Activated CD4-positive, alpha-beta T cell treated with anti-CD3 and anti-CD28 coated beads for 36 hours (primary cell): ENCODE measurements at regions of chr19 and their contacts with region 1.

Region 1: DNA sequence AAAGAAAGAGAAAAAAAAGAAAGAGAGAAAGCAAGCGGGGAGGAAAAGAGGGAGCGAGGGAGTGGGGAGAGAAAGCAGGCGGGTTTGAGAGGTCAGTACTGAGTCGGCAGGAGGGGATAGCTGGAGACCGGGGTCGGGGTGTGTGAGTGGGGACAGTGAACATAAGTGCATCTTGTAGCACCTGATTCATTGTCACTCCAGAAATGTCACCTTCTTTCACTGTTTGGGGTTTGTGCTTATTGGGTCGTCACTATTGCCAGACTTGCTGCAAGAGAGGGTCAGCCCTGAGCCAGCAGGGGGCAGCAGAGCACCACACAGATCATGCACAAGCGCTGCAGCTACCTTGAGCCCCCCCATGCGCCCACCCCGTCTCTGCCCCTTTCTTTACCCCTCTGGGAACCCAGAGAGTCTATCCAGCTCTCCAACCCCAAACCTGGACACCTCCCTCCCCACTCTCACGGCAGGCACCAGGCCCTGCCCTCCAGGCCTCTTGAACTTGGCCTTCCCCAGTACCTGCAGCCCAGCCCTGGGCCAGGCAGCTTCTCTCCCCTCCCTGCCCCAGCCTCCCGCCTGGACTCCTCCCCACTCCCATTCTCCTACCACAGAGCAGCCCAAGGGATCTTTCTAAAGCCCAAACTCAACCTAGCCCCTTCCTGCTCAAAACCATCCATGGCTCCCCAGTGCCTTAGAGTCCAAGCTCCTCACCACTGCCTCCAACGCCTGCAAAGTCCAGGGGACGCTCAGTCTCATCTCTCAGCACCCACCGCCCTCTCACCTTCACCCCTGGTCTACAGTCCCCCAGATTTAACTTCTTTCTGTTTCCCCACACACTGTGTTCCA is 9.7 kb upstream of the CEACAM16 start:
- DNase-seq: peak; percentile 90
- ATAC-seq: peak; percentile 39
- H3K4me3 Mint-ChIP-seq: no peak overlapping the region
- H3K27ac Mint-ChIP-seq: no peak overlapping the region
- H3K4me1 Mint-ChIP-seq: peaks cover 42% of the 10 kb centered on the region
- H3K27me3 Mint-ChIP-seq: peaks cover 17% of the 10 kb centered on the region

Region 2: DNA sequence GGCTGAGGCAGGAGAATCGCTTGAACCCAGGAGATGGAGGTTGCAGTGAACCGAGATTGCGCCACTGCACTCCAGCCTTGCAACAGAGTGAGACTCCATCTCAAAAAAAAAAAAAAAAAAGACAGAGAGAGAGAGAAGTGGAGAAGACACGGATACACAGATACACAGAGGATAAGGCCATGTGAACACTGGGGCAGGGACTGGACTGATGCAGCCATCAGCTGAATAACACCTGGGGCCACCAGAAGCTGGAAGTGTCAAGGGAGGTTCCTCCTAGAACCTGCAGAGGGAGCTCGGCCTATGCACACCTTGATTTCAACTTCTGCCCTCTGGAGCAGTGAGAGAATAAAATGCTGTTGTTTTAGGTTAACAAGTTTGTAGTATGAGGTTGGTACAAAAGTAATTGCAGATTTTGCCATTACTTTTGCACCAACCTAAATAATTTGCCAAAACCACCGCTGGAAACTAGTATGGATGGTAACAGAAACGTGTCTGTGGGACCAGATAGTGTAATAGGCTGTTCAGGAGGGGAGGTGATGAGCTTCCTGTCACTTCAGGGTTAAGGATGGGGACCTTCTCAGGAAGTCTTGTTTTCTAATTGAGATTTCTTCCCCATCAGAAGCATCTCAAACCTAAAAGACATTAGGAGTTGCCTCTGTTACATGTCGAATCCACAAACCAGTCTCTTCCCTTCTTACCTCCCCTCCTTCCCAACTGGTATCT is 112.3 kb before region 1 on chr19:
- CTCF ChIA-PET with region 1: no interaction called
- POLR2A ChIA-PET with region 1: no interaction called
- intact Hi-C with region 1: no loop called
- DNase-seq: peak; percentile 63
- ATAC-seq: peak; percentile 72
- H3K4me3 Mint-ChIP-seq: no peak overlapping the region
- H3K27ac Mint-ChIP-seq: no peak overlapping the region
- H3K4me1 Mint-ChIP-seq: no peaks in the 10 kb centered on the region
- H3K27me3 Mint-ChIP-seq: no peaks in the 10 kb centered on the region

Region 3: GRCh38 chr19:44587963-44588770 is 101.1 kb before region 1 on chr19:
- CTCF ChIA-PET with region 1: interaction called, 5 read pairs
- POLR2A ChIA-PET with region 1: no interaction called
- intact Hi-C with region 1: loop called in 1 of 2 experiments (anchors 1 kb)
- DNase-seq: peak; percentile 71
- ATAC-seq: peak; percentile 87
- H3K4me3 Mint-ChIP-seq: no peak overlapping the region
- H3K27ac Mint-ChIP-seq: peak overlapping the region; percentile 84
- H3K4me1 Mint-ChIP-seq: peaks cover 20% of the 10 kb centered on the region
- H3K27me3 Mint-ChIP-seq: peaks cover 6% of the 10 kb centered on the region

Region 4: DNA sequence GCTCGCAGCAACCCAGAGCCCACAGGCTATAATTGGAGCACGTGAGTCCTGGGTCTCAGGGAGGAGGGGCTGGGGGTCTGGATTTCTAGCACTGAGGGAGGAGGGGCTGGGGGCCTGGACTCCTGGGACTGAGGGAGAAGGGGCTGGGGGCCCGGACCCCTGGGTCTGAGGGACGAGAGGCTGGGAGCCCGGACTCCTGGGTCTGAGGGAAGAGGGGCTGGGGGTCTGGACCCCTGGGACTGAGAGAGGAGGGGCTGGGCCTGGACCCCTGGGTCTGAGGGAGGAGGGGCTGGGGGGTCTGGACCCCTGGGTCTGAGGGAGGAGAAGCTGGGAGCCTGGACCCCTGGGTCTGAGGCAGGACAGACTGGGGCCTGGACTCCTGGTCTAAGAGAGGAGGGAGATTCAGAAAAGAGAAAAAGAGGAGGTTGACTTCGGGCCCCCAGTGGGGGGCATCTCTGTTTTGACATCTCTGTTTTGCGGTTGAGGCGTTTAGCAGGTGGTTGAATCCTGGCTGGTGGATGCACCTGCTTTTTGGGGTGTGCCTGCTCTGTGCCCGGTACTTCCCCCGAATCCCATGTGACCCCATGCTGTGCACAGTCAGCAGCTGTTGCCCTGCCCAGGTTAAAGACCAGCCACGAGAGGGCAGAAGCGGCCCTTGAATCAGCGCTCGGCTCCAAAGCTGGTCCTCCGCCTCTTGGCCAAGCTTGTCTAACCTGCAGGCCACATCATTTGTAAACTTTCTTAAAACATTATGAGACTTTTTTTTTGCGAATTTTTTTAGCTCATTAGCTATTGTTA is 35.1 kb before region 1 on chr19:
- CTCF ChIA-PET with region 1: no interaction called
- POLR2A ChIA-PET with region 1: interaction called, 6 read pairs
- intact Hi-C with region 1: loop called in 1 of 2 experiments (anchors 2 kb)
- DNase-seq: peak; percentile 89
- ATAC-seq: peak; percentile 97
- H3K4me3 Mint-ChIP-seq: no peak overlapping the region
- H3K27ac Mint-ChIP-seq: no peak overlapping the region
- H3K4me1 Mint-ChIP-seq: peaks cover 11% of the 10 kb centered on the region
- H3K27me3 Mint-ChIP-seq: no peaks in the 10 kb centered on the region

Region 5: DNA sequence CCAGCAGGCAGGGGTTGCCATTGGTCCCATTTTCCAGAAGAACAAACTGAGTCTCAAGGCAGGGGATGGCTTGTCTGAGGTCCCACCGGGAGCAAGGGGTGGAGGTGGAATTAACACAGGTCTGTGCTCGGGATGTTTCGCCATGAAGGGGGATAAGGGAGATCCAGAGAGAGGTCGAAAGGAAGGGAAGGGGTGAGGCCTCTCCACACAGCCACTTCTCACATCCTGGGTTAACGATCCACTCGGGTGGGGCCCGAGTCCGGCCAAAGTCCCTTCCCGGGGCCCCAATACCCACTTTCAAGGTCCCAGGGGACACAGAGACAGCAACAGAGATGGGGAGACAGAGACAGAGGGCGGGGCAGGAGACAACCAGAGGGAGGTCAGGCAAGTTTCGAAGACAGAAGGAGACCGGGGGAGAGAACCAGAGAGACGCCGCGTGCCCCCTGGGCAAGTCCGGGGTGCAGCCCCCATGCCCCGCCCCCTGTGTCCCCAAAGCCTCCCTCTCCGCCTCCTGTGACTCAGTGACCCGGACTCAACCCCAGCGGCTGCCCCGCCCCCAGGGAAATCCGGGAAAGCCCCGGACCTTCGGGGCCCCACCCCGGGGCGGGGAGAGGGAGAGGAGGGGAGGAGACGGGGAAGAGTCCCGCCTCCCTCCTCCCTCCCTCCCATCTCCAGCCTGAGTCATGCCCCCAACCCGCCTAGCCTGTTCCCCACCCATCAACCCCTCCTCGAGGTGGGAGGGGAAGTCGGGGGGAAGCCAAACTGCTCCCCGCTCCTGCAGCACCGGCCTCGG is 57.9 kb after region 1 on chr19:
- CTCF ChIA-PET with region 1: no interaction called
- POLR2A ChIA-PET with region 1: no interaction called
- intact Hi-C with region 1: loop called in 1 of 2 experiments (anchors 1 kb)
- DNase-seq: peak; percentile 98
- ATAC-seq: peak; percentile 85
- H3K4me3 Mint-ChIP-seq: peak overlapping the region; percentile 91
- H3K27ac Mint-ChIP-seq: peak overlapping the region; percentile 95
- H3K4me1 Mint-ChIP-seq: peaks cover 43% of the 10 kb centered on the region
- H3K27me3 Mint-ChIP-seq: no peaks in the 10 kb centered on the region

Region 6: GRCh38 chr19:44752816-44753618 is 63.7 kb after region 1 on chr19:
- CTCF ChIA-PET with region 1: interaction called, 3 read pairs
- POLR2A ChIA-PET with region 1: no interaction called
- intact Hi-C with region 1: loop called (anchors 1 kb)
- DNase-seq: peak; percentile 98
- ATAC-seq: peak; percentile 79
- H3K4me3 Mint-ChIP-seq: peak overlapping the region; percentile 94
- H3K27ac Mint-ChIP-seq: peak overlapping the region; percentile 97
- H3K4me1 Mint-ChIP-seq: peaks cover 54% of the 10 kb centered on the region
- H3K27me3 Mint-ChIP-seq: no peaks in the 10 kb centered on the region

Region 7: DNA sequence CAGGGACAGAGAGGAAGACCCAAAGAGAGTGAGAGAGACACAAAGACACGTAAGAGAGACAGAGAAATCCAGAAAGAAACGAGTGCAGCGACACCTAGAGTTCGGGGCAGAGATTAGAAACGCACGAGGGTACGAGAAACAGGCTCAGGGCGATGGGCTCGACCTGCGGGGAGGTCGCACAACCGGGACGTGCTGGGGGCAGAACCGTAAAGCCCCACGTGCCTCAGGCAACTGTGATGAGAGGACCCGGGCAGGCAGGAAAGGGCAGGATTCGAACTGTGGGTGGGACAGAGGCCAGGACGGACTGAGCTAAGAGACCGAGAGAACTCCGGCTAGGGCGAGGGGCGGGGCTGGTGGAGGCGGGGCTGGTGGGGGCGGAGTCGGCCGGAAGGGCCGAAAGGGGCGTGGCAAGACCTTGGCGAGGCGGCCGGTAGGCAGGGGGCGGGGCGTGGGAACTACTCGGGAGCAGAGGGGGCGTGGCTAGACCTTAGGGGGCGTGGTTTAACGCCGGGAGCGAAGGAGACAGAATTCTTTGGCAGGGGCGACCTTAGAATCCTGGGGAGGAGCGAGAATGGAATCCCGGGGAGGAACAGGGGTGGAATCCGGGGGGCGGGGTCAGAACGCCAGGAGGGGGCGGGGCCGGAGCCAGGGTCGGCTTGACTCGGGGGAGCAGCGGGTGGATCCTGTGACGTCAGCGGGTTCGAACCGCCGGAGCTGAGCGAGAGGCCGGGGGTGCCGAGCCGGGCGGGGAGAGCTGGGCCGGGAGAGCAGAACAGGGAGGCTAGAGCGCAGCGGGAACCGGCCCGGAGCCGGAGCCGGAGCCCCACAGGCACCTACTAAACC is 156.6 kb after region 1 on chr19 and contains the start of gene NECTIN2:
- CTCF ChIA-PET with region 1: interaction called, 3 read pairs
- POLR2A ChIA-PET with region 1: no interaction called
- intact Hi-C with region 1: loop called (anchors 1 to 10 kb)
- DNase-seq: peak; percentile 98
- ATAC-seq: peak; percentile 77
- H3K4me3 Mint-ChIP-seq: peak within 1 kb of the TSS; percentile 73
- H3K27ac Mint-ChIP-seq: peak within 1 kb of the TSS; percentile 10
- H3K4me1 Mint-ChIP-seq: peaks cover 21% of the 10 kb centered on the region
- H3K27me3 Mint-ChIP-seq: peaks cover 21% of the 10 kb centered on the region
- total RNA-seq, gene NECTIN2: 0.80 to 0.93 TPM